Calu3 (cell line): ENCODE measurements at regions of chr10 and their contacts with region 1.

Region 1: GRCh38 chr10:59965976-59966650 is 59.8 kb upstream of the CCDC6 start:
- DNase-seq: no peak
- H3K4me3 Mint-ChIP-seq: peak overlapping the region; percentile 8
- H3K27ac Mint-ChIP-seq: peak overlapping the region; percentile 80
- H3K4me1 Mint-ChIP-seq: peaks cover 66% of the 10 kb centered on the region
- H3K27me3 Mint-ChIP-seq: no peaks in the 10 kb centered on the region
- CTCF ChIP-seq: no peak

Region 2: DNA sequence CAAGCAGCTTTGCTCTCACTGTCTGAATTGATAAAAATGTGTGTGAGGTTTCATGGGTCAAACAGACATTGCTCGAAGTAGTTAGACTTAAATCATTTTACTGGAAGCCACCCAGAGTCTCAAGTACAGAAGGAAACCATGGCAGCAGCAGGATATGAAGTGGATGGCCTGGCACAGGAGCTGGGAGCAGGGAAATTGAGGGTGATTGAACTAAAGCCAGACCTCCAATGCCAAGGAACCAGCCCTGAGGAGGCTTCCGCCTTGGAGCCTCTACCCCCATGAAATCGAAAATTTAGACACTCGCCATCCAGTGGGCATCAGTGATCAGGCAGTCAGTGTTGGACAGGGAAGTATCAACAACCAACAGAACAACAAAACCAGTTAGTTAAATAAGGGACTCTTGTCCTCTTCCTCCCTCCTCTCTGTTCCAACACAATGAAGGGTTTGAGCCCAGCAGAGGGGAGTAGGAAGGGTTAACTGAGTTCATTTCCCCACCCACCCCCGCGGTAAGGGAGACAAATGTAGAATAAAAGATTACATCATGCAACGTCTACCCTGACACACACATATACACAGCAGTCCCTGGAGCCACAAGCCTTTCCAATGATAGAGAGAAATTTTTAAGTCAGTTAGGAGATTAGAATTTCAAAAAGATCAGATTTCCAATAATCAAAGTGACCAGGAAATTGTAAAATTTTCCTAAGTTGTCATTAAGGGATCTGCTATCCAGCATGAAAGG is 412.8 kb before region 1 on chr10:
- CTCF ChIA-PET with region 1: no interaction called
- intact Hi-C with region 1: no loop called
- DNase-seq: no peak
- H3K4me3 Mint-ChIP-seq: no peak overlapping the region
- H3K27ac Mint-ChIP-seq: no peak overlapping the region
- H3K4me1 Mint-ChIP-seq: no peaks in the 10 kb centered on the region
- H3K27me3 Mint-ChIP-seq: peaks cover 76% of the 10 kb centered on the region
- CTCF ChIP-seq: no peak

Region 3: GRCh38 chr10:59724098-59724938 is 241.8 kb before region 1 on chr10:
- CTCF ChIA-PET with region 1: no interaction called
- intact Hi-C with region 1: no loop called
- DNase-seq: no peak
- H3K4me3 Mint-ChIP-seq: no peak overlapping the region
- H3K27ac Mint-ChIP-seq: no peak overlapping the region
- H3K4me1 Mint-ChIP-seq: peaks cover 20% of the 10 kb centered on the region
- H3K27me3 Mint-ChIP-seq: no peaks in the 10 kb centered on the region
- CTCF ChIP-seq: no peak

Region 4: GRCh38 chr10:59991661-59992060 is 25.5 kb after region 1 on chr10:
- CTCF ChIA-PET with region 1: interaction called, 9 read pairs
- intact Hi-C with region 1: loop called (anchors 1 kb)
- DNase-seq: peak; percentile 91
- H3K4me3 Mint-ChIP-seq: peak overlapping the region; percentile 60
- H3K27ac Mint-ChIP-seq: peak overlapping the region; percentile 99
- H3K4me1 Mint-ChIP-seq: peaks cover 65% of the 10 kb centered on the region
- H3K27me3 Mint-ChIP-seq: no peaks in the 10 kb centered on the region
- CTCF ChIP-seq: no peak

Region 5: GRCh38 chr10:60023155-60023877 is 57.2 kb after region 1 on chr10:
- CTCF ChIA-PET with region 1: no interaction called
- intact Hi-C with region 1: no loop called
- DNase-seq: no peak
- H3K4me3 Mint-ChIP-seq: no peak overlapping the region
- H3K27ac Mint-ChIP-seq: no peak overlapping the region
- H3K4me1 Mint-ChIP-seq: no peaks in the 10 kb centered on the region
- H3K27me3 Mint-ChIP-seq: no peaks in the 10 kb centered on the region
- CTCF ChIP-seq: no peak